CD4-positive, alpha-beta memory T cell (primary cell): ENCODE measurements at regions of chr5 and their contacts with region 1.

Region 1: DNA sequence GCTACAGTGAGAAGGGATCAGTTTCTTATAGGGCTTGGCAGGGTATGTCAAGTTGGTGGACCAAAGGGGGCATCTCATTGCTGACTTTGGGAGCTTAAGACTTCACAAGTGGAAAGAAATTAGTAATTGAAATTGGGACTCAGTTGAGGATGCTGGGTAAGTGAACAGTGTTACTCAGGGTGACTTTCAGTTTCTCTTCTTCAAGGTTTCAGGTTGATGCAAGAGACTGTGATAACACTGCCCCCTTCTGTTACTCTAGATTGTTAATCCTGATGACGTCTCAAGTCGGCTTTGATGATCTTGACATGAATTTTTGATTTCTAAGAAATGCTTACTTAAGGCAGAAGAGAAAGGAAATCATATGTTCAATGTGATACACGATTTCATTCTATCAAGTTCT is 21.3 kb downstream of the KCTD16 start:
- DNase-seq: peak; percentile 73 to 86 (median 82)
- H3K4me3 ChIP-seq: peak overlapping the region in 1 of 2 donors; percentile 32
- H3K4me3 Mint-ChIP-seq: no peak overlapping the region
- H3K27ac ChIP-seq: peak overlapping the region; percentile 78
- H3K27ac Mint-ChIP-seq: no peak overlapping the region
- H3K4me1 ChIP-seq: peaks cover 55% of the 10 kb centered on the region
- H3K4me1 Mint-ChIP-seq: peaks cover 0 to 40% (median 35%) of the 10 kb centered on the region in 4 donors
- H3K27me3 ChIP-seq: no peaks in the 10 kb centered on the region
- H3K27me3 Mint-ChIP-seq: no peaks in the 10 kb centered on the region

Region 2: DNA sequence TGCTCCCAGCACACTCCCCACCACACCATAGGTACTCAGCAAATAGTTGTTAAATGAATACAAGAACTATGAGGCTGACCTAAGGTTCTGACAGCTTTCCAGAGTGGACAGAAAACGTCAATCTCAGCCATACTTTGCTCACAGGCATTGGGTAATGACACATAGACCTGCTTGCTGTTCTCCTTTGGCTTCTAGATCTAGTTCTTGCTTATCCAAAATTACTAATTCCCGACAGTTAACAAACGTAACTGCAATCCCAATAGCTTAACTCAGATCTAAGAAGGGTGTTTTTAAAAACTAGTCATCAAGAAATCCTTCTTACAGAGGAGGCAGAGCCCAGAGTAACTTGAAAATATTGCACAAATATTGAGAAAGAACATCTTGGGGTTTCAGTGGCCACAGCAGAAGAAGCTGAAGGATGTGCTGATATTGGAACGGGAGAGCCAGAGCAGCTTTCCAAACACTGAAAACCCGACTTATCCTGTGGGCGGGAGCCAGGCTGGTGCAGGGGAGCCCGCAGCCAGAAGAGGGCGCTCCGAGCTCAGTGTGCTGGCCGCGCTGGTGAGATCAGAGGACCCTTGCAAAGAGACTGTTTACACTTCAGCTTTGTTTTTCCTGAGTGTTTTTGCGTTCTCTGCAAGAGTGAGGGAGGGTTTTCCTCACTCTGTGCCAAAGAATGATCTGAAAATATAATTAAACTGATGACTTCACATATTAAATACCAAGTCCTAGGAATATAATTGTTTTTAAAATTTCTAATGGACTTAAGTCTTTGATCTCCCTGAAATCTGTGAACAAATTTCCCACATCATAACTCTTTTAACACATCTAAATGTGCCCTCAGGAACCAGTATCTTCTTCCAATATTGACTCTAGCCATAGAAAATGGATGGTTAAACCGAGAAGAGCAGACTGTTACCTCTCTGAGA is 1536.4 kb before region 1 on chr5:
- CTCF ChIA-PET with region 1: no interaction called
- POLR2A ChIA-PET with region 1: no interaction called
- intact Hi-C with region 1: loop called (anchors 2 kb)
- DNase-seq: peak in 4 of 5 donors; percentile 46 to 62 (median 54)
- H3K4me3 ChIP-seq: no peak overlapping the region
- H3K4me3 Mint-ChIP-seq: no peak overlapping the region
- H3K27ac ChIP-seq: no peak overlapping the region
- H3K27ac Mint-ChIP-seq: no peak overlapping the region
- H3K4me1 ChIP-seq: no peaks in the 10 kb centered on the region
- H3K4me1 Mint-ChIP-seq: peaks cover 0 to 9% (median 3%) of the 10 kb centered on the region in 4 donors
- H3K27me3 ChIP-seq: no peaks in the 10 kb centered on the region
- H3K27me3 Mint-ChIP-seq: peaks cover 4 to 19% of the 10 kb centered on the region in 2 donors

Region 3: GRCh38 chr5:143355720-143356119 is 836.3 kb before region 1 on chr5:
- CTCF ChIA-PET with region 1: no interaction called
- POLR2A ChIA-PET with region 1: no interaction called
- intact Hi-C with region 1: loop called (anchors 5 kb)
- DNase-seq: peak; percentile 64 to 88 (median 74)
- H3K4me3 ChIP-seq: no peak overlapping the region
- H3K4me3 Mint-ChIP-seq: peak overlapping the region in 7 of 8 donors; percentile 28 to 64 (median 35)
- H3K27ac ChIP-seq: no peak overlapping the region
- H3K27ac Mint-ChIP-seq: peak overlapping the region; percentile 38 to 73 (median 57)
- H3K4me1 ChIP-seq: peaks cover 99% of the 10 kb centered on the region
- H3K4me1 Mint-ChIP-seq: peaks cover 59 to 89% (median 72%) of the 10 kb centered on the region in 4 donors
- H3K27me3 ChIP-seq: no peaks in the 10 kb centered on the region
- H3K27me3 Mint-ChIP-seq: no peaks in the 10 kb centered on the region

Region 4: DNA sequence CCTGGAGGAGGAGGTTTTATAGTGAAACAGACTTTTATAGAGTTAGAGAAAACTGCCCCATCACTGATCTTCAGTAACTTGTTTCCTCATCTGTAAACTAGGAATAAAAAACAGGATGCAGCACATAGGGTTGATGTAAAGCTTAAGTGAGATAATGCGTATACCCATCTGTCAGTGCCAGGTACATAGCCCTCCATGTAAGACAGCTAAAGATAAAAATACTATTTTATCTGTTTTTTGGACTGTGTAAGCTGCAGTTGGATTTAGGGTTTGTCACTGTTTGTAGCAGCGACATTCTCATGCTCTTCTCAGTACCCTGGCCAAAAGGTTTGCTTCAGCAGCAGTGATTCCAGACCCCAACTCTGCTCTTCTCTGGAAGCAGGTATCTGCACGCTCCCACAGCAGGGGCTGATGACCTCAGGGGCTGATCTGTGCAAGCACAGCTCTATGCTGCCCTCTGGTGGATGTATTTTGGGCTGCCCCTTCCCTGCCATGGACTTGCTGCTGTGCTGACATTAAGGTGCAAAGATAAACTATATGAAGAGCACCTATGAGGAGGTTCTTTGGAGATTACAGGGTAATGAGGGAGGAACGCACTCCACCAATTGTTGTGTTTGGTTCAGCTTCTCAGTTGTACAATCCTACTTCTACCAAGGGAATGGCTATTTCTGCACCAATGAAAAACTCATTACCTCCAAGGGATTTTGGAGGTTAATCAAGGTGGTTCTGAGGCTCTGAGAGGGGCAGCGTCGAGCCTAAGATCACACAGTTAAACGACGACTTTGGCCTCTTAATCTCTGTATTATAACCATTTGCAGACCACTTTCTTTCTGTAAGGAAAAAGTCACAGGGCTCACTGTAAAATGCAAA is 366.9 kb before region 1 on chr5:
- CTCF ChIA-PET with region 1: interaction called, 78 read pairs
- POLR2A ChIA-PET with region 1: interaction called, 7 read pairs
- intact Hi-C with region 1: loop called (anchors 1 kb)
- DNase-seq: peak; percentile 72 to 80 (median 75)
- H3K4me3 ChIP-seq: no peak overlapping the region
- H3K4me3 Mint-ChIP-seq: no peak overlapping the region
- H3K27ac ChIP-seq: no peak overlapping the region
- H3K27ac Mint-ChIP-seq: no peak overlapping the region
- H3K4me1 ChIP-seq: peaks cover 27% of the 10 kb centered on the region
- H3K4me1 Mint-ChIP-seq: peaks cover 16 to 19% (median 17%) of the 10 kb centered on the region in 4 donors
- H3K27me3 ChIP-seq: no peaks in the 10 kb centered on the region
- H3K27me3 Mint-ChIP-seq: peaks cover 0 to 2% of the 10 kb centered on the region in 2 donors

Region 5: DNA sequence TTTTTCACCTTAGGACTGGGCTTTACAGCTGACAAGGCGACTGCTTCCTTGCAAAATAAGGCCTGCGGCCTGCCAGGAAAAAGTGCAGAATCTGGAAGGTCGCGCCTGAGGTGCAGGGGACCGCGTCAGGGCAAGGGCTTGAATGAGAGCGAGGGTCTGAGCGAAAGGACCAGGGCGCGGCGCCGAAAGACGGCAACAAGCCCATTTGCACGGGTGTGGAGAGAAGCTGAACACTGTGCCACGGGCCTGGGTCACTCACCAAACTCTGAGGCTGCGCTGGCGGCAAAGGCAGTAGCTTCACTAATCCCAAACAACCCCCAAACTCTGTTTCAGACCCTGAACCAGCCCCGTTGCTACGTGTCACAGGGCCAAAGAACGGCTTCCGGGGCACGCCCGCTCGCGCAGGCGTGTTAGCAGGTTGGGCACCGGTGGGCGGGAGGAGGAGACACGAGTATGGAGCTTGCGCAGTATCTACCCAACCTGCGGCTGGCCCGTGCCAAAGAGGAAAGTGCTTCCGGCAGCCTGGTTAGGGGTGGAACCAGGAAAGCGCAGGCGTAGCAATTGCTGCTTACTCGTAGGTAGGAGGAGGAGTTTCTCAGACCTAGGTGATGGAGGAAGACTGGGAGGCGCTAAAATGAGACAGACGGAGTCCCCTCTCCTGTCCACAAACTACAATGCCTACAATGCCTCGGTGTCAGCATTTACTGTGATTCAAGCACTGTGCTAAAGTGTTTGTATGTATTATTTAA is 21.5 kb before region 1 on chr5 and contains the starts of genes KCTD16 and YIPF5:
- CTCF ChIA-PET with region 1: interaction called, 138 read pairs
- POLR2A ChIA-PET with region 1: interaction called, 150 read pairs
- intact Hi-C with region 1: loop called (anchors 1 kb)
- DNase-seq: peak; percentile 96 to 99 (median 98)
- H3K4me3 ChIP-seq: peak within 1 kb of the TSS; percentile 66 to 97
- H3K4me3 Mint-ChIP-seq: peak within 1 kb of the TSS; percentile 84 to 98 (median 93)
- H3K27ac ChIP-seq: peak within 1 kb of the TSS; percentile 92
- H3K27ac Mint-ChIP-seq: peak within 1 kb of the TSS; percentile 90 to 99 (median 94)
- H3K4me1 ChIP-seq: peaks cover 44% of the 10 kb centered on the region
- H3K4me1 Mint-ChIP-seq: peaks cover 27 to 50% (median 45%) of the 10 kb centered on the region in 4 donors
- H3K27me3 ChIP-seq: no peaks in the 10 kb centered on the region
- H3K27me3 Mint-ChIP-seq: no peaks in the 10 kb centered on the region
- total RNA-seq, gene KCTD16: 0.14 to 0.20 TPM
- total RNA-seq, gene YIPF5: 50.5 to 56.3 TPM

Region 6: DNA sequence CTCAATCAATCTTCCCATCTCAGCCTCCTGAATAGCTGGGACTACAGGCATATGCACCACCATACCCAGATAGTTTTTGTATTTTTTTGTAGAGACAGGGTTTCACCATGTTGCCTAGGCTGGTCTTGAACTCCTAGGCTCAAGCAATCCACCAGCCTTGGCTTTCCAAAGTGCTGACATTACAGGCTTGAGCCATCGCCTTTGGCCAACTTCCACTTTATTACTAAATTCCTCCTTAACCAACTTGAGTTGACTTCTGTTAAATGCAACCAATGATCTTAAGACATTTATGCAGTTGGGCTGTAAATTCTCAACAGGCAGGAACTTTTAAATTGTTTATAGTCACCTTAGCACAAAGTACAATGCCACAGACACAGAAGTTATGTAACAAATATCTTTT is 1987.7 kb after region 1 on chr5:
- CTCF ChIA-PET with region 1: no interaction called
- POLR2A ChIA-PET with region 1: no interaction called
- intact Hi-C with region 1: loop called (anchors 5 kb)
- DNase-seq: no peak
- H3K4me3 ChIP-seq: no peak overlapping the region
- H3K4me3 Mint-ChIP-seq: peak overlapping the region in 5 of 8 donors; percentile 12 to 33 (median 23)
- H3K27ac ChIP-seq: no peak overlapping the region
- H3K27ac Mint-ChIP-seq: peak overlapping the region in 1 of 7 donors; percentile 25
- H3K4me1 ChIP-seq: peaks cover 30% of the 10 kb centered on the region
- H3K4me1 Mint-ChIP-seq: peaks cover 15 to 30% (median 24%) of the 10 kb centered on the region in 4 donors
- H3K27me3 ChIP-seq: no peaks in the 10 kb centered on the region
- H3K27me3 Mint-ChIP-seq: no peaks in the 10 kb centered on the region